ENCODE measurements at regions of chr3 and their contacts with region 1.

Region 1: GRCh38 chr3:17431004-17431403 is 311.4 kb downstream of the TBC1D5 start:
- DNase-seq: no peak
- ATAC-seq: no peak
- H3K4me3 ChIP-seq: no peak overlapping the region
- H3K27ac ChIP-seq: no peak overlapping the region
- H3K4me1 ChIP-seq: peaks cover 0 to 1% of the 10 kb centered on the region in 2 donors
- H3K27me3 ChIP-seq: no peaks in the 10 kb centered on the region

Region 2: DNA sequence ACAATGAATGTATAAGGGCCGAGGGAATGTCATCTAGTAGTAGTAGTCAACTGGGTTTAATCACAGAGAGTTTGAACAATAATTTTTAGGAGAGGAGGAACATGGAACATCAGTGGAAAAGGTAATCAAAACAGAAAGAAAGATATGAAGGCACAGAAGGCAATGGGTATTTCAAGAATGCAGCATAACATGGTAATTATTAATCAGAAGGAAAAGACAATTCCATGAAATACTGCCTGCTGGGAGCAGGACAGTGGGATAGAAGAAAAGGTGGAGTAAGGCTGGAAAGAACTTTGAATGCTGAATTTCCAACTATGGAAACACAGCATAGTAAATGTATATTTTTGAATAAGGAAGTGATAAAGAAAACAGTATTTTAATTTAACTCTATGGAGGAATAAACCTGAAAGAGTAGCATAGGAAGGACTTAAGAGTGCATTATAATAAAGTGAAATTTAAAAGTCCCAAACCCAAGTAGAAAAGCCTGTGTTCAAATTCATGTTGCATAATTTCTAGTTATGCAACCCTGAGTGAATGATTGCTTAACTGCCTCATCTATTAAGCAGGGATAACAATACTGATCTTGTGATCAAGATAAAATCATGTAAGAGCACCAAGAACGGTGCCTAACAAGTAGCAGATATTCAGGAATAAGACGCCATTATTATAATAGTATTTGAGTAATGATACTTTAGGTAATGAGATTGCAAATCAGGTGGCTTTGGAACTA is 46.3 kb before region 1 on chr3:
- intact Hi-C with region 1: no loop called
- DNase-seq: no peak
- ATAC-seq: no peak
- H3K4me3 ChIP-seq: no peak overlapping the region
- H3K27ac ChIP-seq: no peak overlapping the region
- H3K4me1 ChIP-seq: peaks cover 0 to 2% of the 10 kb centered on the region in 2 donors
- H3K27me3 ChIP-seq: no peaks in the 10 kb centered on the region

Region 3: DNA sequence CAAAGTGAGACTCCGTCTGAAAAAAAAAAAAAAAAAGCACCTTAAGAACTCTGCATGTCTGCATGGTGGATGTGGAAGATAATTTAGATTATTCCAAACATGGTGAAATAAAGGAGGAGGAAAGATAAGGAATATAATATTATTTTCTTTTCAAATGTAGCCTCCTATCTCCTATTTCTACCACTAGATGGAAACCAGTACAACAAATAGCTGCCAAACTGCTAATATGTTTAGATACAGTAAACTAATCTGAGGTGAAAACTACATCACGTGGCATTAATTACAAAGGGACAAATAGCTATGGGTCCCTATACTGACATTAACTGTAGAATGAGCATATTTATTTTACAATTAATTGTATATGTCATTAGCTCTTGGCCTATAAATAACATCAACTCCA is 113.6 kb after region 1 on chr3:
- intact Hi-C with region 1: no loop called
- DNase-seq: no peak
- ATAC-seq: no peak
- H3K4me3 ChIP-seq: no peak overlapping the region
- H3K27ac ChIP-seq: no peak overlapping the region
- H3K4me1 ChIP-seq: no peaks in the 10 kb centered on the region
- H3K27me3 ChIP-seq: no peaks in the 10 kb centered on the region

Region 4: GRCh38 chr3:17841190-17841828 is 410.3 kb after region 1 on chr3:
- intact Hi-C with region 1: loop called (anchors 2 kb)
- DNase-seq: peak; percentile 62 to 91
- ATAC-seq: peak; percentile 92
- H3K4me3 ChIP-seq: no peak overlapping the region
- H3K27ac ChIP-seq: no peak overlapping the region
- H3K4me1 ChIP-seq: peaks cover 0 to 2% of the 10 kb centered on the region in 2 donors
- H3K27me3 ChIP-seq: no peaks in the 10 kb centered on the region